ENCODE measurements at regions of chr15 and their contacts with region 1.

Region 1: DNA sequence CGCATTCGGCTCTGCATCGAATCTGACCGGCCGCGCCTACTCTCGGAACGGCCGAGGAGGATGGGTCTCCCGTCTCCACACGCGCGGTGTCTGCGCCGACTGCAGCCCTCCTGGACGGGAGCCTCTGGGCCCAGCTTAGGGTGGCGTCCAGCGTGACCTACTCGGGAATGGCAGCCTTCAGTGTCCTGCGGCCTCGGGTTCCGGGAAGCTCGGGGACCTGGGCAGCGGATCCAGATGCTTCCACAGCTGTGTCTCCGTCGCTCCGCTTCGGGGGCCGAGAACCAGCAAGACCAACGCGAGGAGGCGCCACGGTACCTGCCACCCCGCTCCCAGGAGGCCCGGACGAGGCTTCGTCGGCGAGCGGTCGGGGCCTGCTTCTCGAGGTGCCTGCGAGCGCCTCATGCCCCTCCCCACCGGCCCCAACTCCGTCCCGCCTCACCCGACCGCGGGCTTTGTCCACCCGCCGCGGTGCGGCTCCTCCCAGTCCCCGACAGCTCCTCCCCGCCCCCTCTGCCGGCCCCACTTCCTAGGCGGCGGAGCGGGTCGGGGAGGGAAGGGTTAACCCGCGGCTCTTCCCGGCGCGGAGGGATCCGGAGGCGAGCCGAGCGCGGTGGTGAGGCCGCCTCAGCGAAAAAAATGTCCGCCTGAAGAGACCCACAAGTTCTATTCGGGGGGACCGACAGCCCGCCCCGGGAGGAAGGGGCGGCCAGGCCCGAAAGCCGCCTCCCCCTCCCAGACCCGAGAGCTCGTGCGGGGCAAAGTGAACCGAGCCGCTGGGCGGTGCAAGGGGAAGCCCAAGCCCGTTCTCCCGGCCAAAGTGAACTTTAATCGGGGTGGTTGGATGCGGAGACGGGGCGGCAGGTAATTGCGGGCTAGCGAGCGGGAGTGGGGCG is at the start of gene TCF12:
- H3K4me3 Mint-ChIP-seq: peak within 1 kb of the TSS; percentile 85
- H3K27ac Mint-ChIP-seq: peak within 1 kb of the TSS; percentile 93
- H3K4me1 Mint-ChIP-seq: peaks cover 34% of the 10 kb centered on the region
- H3K27me3 Mint-ChIP-seq: no peaks in the 10 kb centered on the region

Region 2: GRCh38 chr15:56821721-56822425 is 96.4 kb before region 1 on chr15:
- intact Hi-C with region 1: loop called (anchors 5 kb)
- H3K4me3 Mint-ChIP-seq: no peak overlapping the region
- H3K27ac Mint-ChIP-seq: no peak overlapping the region
- H3K4me1 Mint-ChIP-seq: peaks cover 28% of the 10 kb centered on the region
- H3K27me3 Mint-ChIP-seq: no peaks in the 10 kb centered on the region

Region 3: GRCh38 chr15:56835718-56836171 is 82.5 kb before region 1 on chr15:
- intact Hi-C with region 1: no loop called
- H3K4me3 Mint-ChIP-seq: no peak overlapping the region
- H3K27ac Mint-ChIP-seq: no peak overlapping the region
- H3K4me1 Mint-ChIP-seq: peaks cover 49% of the 10 kb centered on the region
- H3K27me3 Mint-ChIP-seq: no peaks in the 10 kb centered on the region

Region 4: DNA sequence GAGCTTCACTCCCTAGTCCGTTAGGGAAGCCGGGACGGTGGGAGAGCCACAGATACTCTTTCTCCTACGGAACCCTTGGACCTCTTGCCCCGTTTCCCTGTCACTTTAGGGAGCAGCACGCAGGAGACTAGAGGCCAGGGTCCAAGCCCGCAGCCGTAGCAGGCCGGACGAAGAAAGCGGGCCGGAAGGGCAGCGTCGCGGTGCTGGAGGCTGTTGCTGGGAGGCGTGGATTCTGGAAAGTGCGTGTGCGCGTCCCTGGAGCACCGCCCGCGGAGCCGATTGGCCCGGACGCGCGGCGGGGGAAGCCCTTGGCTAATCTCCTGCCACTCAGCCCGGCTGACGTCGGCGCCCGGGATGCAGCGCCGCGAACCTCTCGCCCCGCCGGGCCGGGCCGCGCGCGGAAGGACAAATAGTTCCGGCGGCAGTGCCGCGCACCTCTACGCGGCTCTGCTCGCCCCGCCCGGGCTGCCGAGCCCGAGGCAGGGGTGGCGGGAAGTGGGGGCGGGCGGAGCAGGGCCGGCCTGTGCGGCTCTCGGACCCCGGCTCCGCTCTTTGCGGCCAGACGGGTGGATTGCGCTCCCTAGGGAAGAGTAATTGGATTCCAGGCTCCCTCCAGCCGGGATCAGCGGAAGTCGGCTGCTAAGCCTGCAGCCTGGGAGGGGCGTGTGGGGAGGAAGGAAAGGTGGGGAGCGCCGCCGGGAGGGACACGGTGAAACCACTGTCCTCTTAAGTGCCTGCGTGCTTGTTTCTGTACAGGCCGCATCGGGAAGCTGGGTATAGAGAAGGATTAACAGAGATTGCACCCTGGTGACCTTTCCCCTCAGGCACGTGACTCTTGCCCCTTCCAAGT is 31.1 kb before region 1 on chr15:
- intact Hi-C with region 1: loop called (anchors 1 kb)
- H3K4me3 Mint-ChIP-seq: peak overlapping the region; percentile 84
- H3K27ac Mint-ChIP-seq: peak overlapping the region; percentile 96
- H3K4me1 Mint-ChIP-seq: peaks cover 43% of the 10 kb centered on the region
- H3K27me3 Mint-ChIP-seq: no peaks in the 10 kb centered on the region

Region 5: GRCh38 chr15:57079931-57080620 is 161.8 kb after region 1 on chr15:
- intact Hi-C with region 1: loop called (anchors 10 kb)
- H3K4me3 Mint-ChIP-seq: peak overlapping the region; percentile 37
- H3K27ac Mint-ChIP-seq: peak overlapping the region; percentile 91
- H3K4me1 Mint-ChIP-seq: peaks cover 21% of the 10 kb centered on the region
- H3K27me3 Mint-ChIP-seq: no peaks in the 10 kb centered on the region

Region 6: DNA sequence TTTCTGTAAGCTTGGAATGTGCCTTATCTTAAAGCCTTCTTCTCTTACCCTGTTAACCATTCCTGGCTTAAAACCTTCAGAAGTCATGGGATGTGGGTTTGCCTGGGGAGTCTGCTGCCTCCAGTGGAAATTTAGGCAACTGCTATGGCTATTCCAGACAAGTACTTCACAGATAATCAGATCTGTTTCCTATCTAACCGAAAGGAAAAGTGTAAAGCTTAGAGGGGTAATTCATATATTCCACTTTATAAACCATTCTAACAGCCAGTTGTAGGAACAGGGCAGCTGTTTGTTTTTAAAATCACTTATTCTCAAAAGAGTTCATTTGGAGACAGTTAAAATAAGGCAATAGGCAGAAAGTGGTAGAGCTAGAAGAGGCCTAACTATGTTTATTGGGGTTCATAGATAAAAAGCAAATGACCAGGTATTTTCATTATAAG is 220.1 kb after region 1 on chr15:
- intact Hi-C with region 1: loop called (anchors 10 kb)
- H3K4me3 Mint-ChIP-seq: no peak overlapping the region
- H3K27ac Mint-ChIP-seq: no peak overlapping the region
- H3K4me1 Mint-ChIP-seq: peaks cover 30% of the 10 kb centered on the region
- H3K27me3 Mint-ChIP-seq: no peaks in the 10 kb centered on the region